ENCODE measurements at regions of chr3 and their contacts with region 1.

Region 1: GRCh38 chr3:150546226-150547044 is at the starts of genes EIF2A and SERP1:
- DNase-seq: peak; percentile 87 to 99 (median 92)
- ATAC-seq: peak; percentile 94
- H3K4me3 ChIP-seq: peak within 1 kb of the TSS; percentile 93
- H3K27ac ChIP-seq: peak within 1 kb of the TSS; percentile 95
- H3K4me1 ChIP-seq: peaks cover 4% of the 10 kb centered on the region in 2 experiments; a peak in 2 of 5 replicates
- H3K27me3 ChIP-seq: no peaks in the 10 kb centered on the region
- CTCF ChIP-seq: no peak; a peak in 1 of 6 replicates
- EP300 ChIP-seq: no peak
- POLR2A ChIP-seq: peak; percentile 94
- RAD21 ChIP-seq: no peak
- polyA plus RNA-seq, gene EIF2A: 130 to 172 TPM
- polyA plus RNA-seq, gene SERP1: 38.6 to 42.4 TPM

Region 2: GRCh38 chr3:150577859-150578258 is 31.4 kb after region 1 on chr3:
- CTCF ChIA-PET with region 1: interaction called, 3 read pairs
- POLR2A ChIA-PET with region 1: interaction called, 3 read pairs
- in situ Hi-C with region 1: no loop called
- intact Hi-C with region 1: loop called (anchors 1 kb)
- DNase-seq: no peak
- ATAC-seq: no peak; the same call in 2 of the 3 replicates
- H3K4me3 ChIP-seq: no peak overlapping the region
- H3K27ac ChIP-seq: no peak overlapping the region
- H3K4me1 ChIP-seq: no peaks in the 10 kb centered on the region
- H3K27me3 ChIP-seq: no peaks in the 10 kb centered on the region
- CTCF ChIP-seq: no peak; a peak in 1 of 6 replicates
- EP300 ChIP-seq: no peak
- POLR2A ChIP-seq: no peak
- RAD21 ChIP-seq: no peak

Region 3: GRCh38 chr3:150603153-150603979 is 56.9 kb after region 1 on chr3 and contains the start of gene SELENOT:
- CTCF ChIA-PET with region 1: no interaction called
- POLR2A ChIA-PET with region 1: interaction called, 3 read pairs
- in situ Hi-C with region 1: no loop called
- intact Hi-C with region 1: loop called (anchors 1 kb)
- DNase-seq: peak; percentile 97 to 98 (median 98)
- ATAC-seq: peak; percentile 82
- H3K4me3 ChIP-seq: peak within 1 kb of the TSS; percentile 94
- H3K27ac ChIP-seq: peak within 1 kb of the TSS; percentile 84
- H3K4me1 ChIP-seq: peaks cover 16 to 40% of the 10 kb centered on the region in 2 experiments
- H3K27me3 ChIP-seq: no peaks in the 10 kb centered on the region
- CTCF ChIP-seq: peak in 2 of 3 experiments; percentile 36 to 48; a peak in 3 of 6 replicates
- EP300 ChIP-seq: no peak; the same call in 1 of the 2 replicates
- POLR2A ChIP-seq: peak; percentile 98
- RAD21 ChIP-seq: peak in 1 of 2 experiments; percentile 32; a peak in 3 of 4 replicates
- polyA plus RNA-seq, gene SELENOT: 261 to 317 TPM

Region 4: GRCh38 chr3:150870396-150870795 is 324.0 kb after region 1 on chr3:
- CTCF ChIA-PET with region 1: no interaction called
- POLR2A ChIA-PET with region 1: no interaction called
- in situ Hi-C with region 1: loop called (anchors 25 kb)
- intact Hi-C with region 1: no loop called
- DNase-seq: no peak
- ATAC-seq: no peak
- H3K4me3 ChIP-seq: no peak overlapping the region
- H3K27ac ChIP-seq: no peak overlapping the region
- H3K4me1 ChIP-seq: no peaks in the 10 kb centered on the region
- H3K27me3 ChIP-seq: peaks cover 2 to 10% of the 10 kb centered on the region in 2 experiments; a peak in 2 of 5 replicates
- CTCF ChIP-seq: no peak
- EP300 ChIP-seq: no peak
- POLR2A ChIP-seq: no peak
- RAD21 ChIP-seq: no peak